Panc1 (cell line): ENCODE measurements at regions of chr3 and their contacts with region 1.

Region 1: DNA sequence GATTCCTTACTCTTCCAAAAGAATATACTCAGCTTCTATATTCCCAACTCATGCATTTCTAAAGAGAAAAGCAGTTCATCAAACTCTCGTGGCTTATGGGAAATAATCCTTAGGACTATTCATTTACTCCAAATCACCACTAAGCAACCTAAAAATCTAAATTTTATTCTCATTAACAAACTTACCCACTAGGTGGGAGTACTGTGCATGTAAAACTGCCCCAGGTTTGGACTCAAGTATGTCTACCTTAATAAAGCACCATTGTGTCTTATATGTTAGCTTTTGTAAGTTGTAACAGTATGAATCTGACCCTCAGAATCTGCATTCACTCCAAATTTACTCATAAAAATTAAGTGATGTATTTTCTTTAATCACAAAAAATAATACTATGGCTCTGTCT is 25.3 kb downstream of the RAD18 start:
- DNase-seq: no peak
- ATAC-seq: no peak
- H3K4me3 ChIP-seq: no peak overlapping the region
- H3K27ac ChIP-seq: peak overlapping the region; percentile 84
- H3K4me1 ChIP-seq: peaks cover 24% of the 10 kb centered on the region
- H3K27me3 ChIP-seq: no peaks in the 10 kb centered on the region
- CTCF ChIP-seq: peak; percentile 42; the same call in 1 of the 2 replicates

Region 2: GRCh38 chr3:8769088-8769822 is 168.8 kb before region 1 on chr3 and contains the start of gene OXTR:
- CTCF ChIA-PET with region 1: interaction called, 10 read pairs
- POLR2A ChIA-PET with region 1: no interaction called
- in situ Hi-C with region 1: no loop called
- intact Hi-C with region 1: no loop called
- DNase-seq: peak; percentile 38
- ATAC-seq: peak; percentile 99
- H3K4me3 ChIP-seq: peak within 1 kb of the TSS; percentile 55 to 70
- H3K27ac ChIP-seq: peak within 1 kb of the TSS; percentile 34; the same call in 1 of the 2 replicates
- H3K4me1 ChIP-seq: no peaks in the 10 kb centered on the region; the same call in 1 of the 2 replicates
- H3K27me3 ChIP-seq: no peaks in the 10 kb centered on the region
- CTCF ChIP-seq: peak; percentile 98
- total RNA-seq, gene OXTR: 2.7 TPM

Region 3: GRCh38 chr3:9396700-9397521 is 458.9 kb after region 1 on chr3:
- CTCF ChIA-PET with region 1: interaction called, 12 read pairs
- POLR2A ChIA-PET with region 1: no interaction called
- in situ Hi-C with region 1: no loop called
- intact Hi-C with region 1: no loop called
- DNase-seq: peak; percentile 93
- ATAC-seq: peak; percentile 87
- H3K4me3 ChIP-seq: peak overlapping the region; percentile 78 to 93
- H3K27ac ChIP-seq: peak overlapping the region; percentile 76
- H3K4me1 ChIP-seq: peaks cover 34% of the 10 kb centered on the region
- H3K27me3 ChIP-seq: no peaks in the 10 kb centered on the region
- CTCF ChIP-seq: no peak